HEK293 (cell line): ENCODE measurements at regions of chr2 and their contacts with region 1.

Region 1: GRCh38 chr2:69306822-69307578 is 80.0 kb downstream of the GFPT1 start:
- H3K4me3 ChIP-seq: peak overlapping the region; percentile 62
- H3K27ac ChIP-seq: peak overlapping the region; percentile 20; the same call in 1 of the 2 replicates
- H3K4me1 ChIP-seq: peaks cover 2% of the 10 kb centered on the region; the same call in 1 of the 2 replicates
- CTCF ChIP-seq: peak; percentile 93

Region 2: GRCh38 chr2:68943581-68944568 is 363.1 kb before region 1 on chr2:
- CTCF ChIA-PET with region 1: interaction called, 29 read pairs
- POLR2A ChIA-PET with region 1: no interaction called
- H3K4me3 ChIP-seq: no peak overlapping the region
- H3K27ac ChIP-seq: no peak overlapping the region
- H3K4me1 ChIP-seq: no peaks in the 10 kb centered on the region
- CTCF ChIP-seq: peak; percentile 62

Region 3: GRCh38 chr2:69012310-69013141 is 294.5 kb before region 1 on chr2:
- CTCF ChIA-PET with region 1: interaction called, 25 read pairs
- POLR2A ChIA-PET with region 1: interaction called, 3 read pairs
- H3K4me3 ChIP-seq: peak overlapping the region; percentile 92
- H3K27ac ChIP-seq: peak overlapping the region; percentile 70; the same call in 1 of the 2 replicates
- H3K4me1 ChIP-seq: no peaks in the 10 kb centered on the region
- CTCF ChIP-seq: peak; percentile 78

Region 4: DNA sequence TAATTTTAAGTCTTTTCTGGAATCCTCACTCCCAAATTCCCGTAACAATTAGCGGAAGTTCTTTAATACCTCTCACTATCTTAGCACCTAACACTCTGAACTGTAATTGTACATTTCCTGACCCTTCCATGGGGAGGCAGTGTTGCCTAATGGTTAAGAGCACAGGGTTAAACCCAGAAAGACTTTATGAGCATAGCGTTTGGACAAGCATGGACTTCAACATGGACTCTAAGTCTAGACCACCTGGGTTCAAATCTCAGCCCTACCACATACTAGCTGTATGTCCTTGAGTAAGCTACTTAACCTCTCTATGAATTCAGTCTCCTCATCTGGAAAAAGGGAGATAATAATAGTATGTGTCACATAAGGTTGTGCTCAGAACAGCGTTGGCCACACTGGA is 281.0 kb before region 1 on chr2:
- CTCF ChIA-PET with region 1: interaction called, 14 read pairs
- POLR2A ChIA-PET with region 1: no interaction called
- H3K4me3 ChIP-seq: no peak overlapping the region
- H3K27ac ChIP-seq: no peak overlapping the region
- H3K4me1 ChIP-seq: no peaks in the 10 kb centered on the region
- CTCF ChIP-seq: no peak